ENCODE measurements at regions of chr15 and their contacts with region 1.

Region 1: DNA sequence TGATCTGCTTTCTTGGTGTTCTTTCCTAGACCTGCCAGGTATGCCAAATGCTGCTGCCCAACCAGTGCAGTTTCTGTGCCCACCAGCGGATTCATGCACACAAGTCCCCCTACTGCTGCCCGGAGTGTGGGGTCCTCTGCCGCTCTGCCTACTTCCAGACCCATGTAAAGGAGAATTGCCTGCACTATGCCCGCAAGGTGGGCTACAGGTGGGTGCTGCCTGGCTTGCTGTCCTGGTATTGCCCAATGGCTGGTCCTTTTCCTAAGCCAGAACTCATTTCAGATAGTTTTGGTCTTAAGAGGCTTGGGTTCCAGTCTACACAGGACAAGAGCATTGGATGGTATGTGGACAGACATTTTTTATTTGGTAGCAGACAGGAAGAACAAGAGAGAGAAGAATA is 26.5 kb upstream of the ALPK3 start:
- DNase-seq: no peak
- H3K4me3 ChIP-seq: no peak overlapping the region
- H3K27ac ChIP-seq: no peak overlapping the region
- H3K4me1 ChIP-seq: no peaks in the 10 kb centered on the region
- H3K27me3 ChIP-seq: no peaks in the 10 kb centered on the region
- CTCF ChIP-seq: no peak

Region 2: DNA sequence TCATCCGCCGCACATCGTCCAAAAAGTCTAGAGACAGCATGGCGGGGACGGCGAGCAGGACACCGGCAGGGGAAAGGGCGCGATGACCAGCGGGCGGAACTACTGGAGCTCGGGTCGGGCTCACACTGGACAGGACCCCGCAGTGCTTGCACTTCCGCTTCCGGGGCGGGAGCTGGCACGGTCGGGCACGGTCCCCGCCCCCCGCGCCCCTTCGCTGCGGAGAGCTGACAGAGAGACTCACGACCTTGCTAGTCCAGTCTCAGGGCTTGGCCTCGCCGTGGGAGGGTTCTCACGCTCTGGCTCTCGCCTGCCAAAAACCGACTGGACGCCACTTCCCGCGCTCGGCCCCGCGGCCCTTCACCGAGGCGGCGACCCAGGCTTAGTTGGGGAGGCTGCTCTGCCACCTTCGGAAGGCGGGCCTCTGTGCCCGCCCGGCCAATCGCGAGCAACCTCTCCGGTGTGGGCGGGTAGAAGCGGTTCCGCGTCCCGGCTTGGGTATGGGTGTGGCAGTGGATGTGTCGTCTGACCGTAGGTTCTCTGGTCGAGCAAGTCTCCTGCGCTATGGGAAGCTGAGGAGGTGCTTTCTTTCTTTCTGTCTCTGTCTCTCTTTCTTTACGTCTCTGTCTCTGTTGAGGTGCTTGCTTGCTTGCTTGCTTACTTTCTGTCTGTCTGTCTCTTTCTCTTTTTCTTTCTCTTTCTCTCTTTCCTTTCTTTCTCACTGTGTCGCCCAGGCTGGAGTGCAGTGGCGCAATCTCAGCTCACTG is 74.5 kb before region 1 on chr15 and contains the start of gene SEC11A:
- CTCF ChIA-PET with region 1: no interaction called
- POLR2A ChIA-PET with region 1: interaction called, 17 read pairs
- intact Hi-C with region 1: no loop called
- DNase-seq: peak; percentile 97
- H3K4me3 ChIP-seq: peak within 1 kb of the TSS; percentile 98
- H3K27ac ChIP-seq: peak within 1 kb of the TSS; percentile 78
- H3K4me1 ChIP-seq: peaks cover 9% of the 10 kb centered on the region
- H3K27me3 ChIP-seq: no peaks in the 10 kb centered on the region
- CTCF ChIP-seq: no peak
- total RNA-seq, gene SEC11A: 104 and 106 TPM in 2 replicates